ENCODE measurements at regions of chr17 and their contacts with region 1.

Region 1: DNA sequence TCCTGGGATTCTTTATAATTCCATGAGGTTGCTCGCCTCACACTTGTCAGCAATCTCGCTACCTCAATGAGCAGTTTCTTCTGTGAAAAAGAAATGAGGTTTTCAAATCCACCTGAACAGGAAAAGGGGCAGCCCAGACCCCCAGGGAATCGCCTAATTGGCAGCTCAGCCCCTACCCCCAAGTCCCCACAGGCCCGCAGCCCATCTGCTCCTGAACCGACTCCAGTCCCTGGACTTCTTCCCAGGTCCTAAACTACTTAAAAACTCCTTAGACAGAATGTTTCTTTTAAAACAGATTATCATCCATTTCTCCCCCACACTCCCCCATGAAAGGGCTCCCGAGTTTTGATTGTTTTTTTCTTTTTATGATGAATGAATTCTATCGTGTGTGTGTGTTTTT is 89.8 kb downstream of the PMP22 start:
- DNase-seq: no peak
- H3K4me3 ChIP-seq: no peak overlapping the region
- H3K27ac ChIP-seq: no peak overlapping the region
- H3K4me1 ChIP-seq: no peaks in the 10 kb centered on the region
- H3K27me3 ChIP-seq: peaks cover 3% of the 10 kb centered on the region
- CTCF ChIP-seq: no peak
- EP300 ChIP-seq: no peak
- POLR2A ChIP-seq: no peak

Region 2: GRCh38 chr17:14539801-14540200 is 635.6 kb before region 1 on chr17:
- in situ Hi-C with region 1: no loop called
- intact Hi-C with region 1: loop called (anchors 5 kb)
- DNase-seq: no peak
- H3K4me3 ChIP-seq: no peak overlapping the region
- H3K27ac ChIP-seq: no peak overlapping the region
- H3K4me1 ChIP-seq: no peaks in the 10 kb centered on the region
- H3K27me3 ChIP-seq: no peaks in the 10 kb centered on the region
- CTCF ChIP-seq: no peak
- EP300 ChIP-seq: no peak
- POLR2A ChIP-seq: no peak

Region 3: GRCh38 chr17:15247891-15248529 is 72.7 kb after region 1 on chr17:
- in situ Hi-C with region 1: no loop called
- intact Hi-C with region 1: no loop called
- DNase-seq: no peak
- H3K4me3 ChIP-seq: no peak overlapping the region
- H3K27ac ChIP-seq: peak overlapping the region in 1 of 4 donors; percentile 22
- H3K4me1 ChIP-seq: peaks cover 3 to 59% (median 13%) of the 10 kb centered on the region in 4 donors
- H3K27me3 ChIP-seq: no peaks in the 10 kb centered on the region
- CTCF ChIP-seq: peak in 3 of 5 experiments; percentile 4 to 14 (median 14)
- EP300 ChIP-seq: no peak
- POLR2A ChIP-seq: no peak